ENCODE measurements at regions of chr2 and their contacts with region 1.

Region 1: DNA sequence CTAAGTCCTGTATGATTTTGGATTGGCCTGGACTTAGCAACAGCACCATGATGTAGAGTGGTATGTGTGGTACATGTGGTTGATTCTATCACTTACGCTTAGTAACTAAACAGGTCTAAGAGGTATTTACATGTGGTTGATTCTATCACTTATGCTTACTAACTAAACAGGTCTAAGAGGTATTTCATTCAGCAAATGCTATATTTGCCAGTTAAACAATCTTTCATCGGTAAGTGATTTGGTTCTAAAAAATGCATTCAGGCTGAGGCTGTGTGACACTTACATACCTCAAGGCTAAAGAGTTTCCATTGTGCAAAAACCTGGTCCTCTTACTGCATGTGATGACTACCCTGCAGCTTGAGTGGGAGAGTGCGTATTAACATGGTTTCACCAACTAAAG is 13.1 kb downstream of the EIF4E2 start:
- DNase-seq: no peak
- H3K4me3 Mint-ChIP-seq: no peak overlapping the region
- H3K27ac Mint-ChIP-seq: no peak overlapping the region
- H3K4me1 Mint-ChIP-seq: peaks cover 15% of the 10 kb centered on the region
- H3K27me3 Mint-ChIP-seq: no peaks in the 10 kb centered on the region

Region 2: DNA sequence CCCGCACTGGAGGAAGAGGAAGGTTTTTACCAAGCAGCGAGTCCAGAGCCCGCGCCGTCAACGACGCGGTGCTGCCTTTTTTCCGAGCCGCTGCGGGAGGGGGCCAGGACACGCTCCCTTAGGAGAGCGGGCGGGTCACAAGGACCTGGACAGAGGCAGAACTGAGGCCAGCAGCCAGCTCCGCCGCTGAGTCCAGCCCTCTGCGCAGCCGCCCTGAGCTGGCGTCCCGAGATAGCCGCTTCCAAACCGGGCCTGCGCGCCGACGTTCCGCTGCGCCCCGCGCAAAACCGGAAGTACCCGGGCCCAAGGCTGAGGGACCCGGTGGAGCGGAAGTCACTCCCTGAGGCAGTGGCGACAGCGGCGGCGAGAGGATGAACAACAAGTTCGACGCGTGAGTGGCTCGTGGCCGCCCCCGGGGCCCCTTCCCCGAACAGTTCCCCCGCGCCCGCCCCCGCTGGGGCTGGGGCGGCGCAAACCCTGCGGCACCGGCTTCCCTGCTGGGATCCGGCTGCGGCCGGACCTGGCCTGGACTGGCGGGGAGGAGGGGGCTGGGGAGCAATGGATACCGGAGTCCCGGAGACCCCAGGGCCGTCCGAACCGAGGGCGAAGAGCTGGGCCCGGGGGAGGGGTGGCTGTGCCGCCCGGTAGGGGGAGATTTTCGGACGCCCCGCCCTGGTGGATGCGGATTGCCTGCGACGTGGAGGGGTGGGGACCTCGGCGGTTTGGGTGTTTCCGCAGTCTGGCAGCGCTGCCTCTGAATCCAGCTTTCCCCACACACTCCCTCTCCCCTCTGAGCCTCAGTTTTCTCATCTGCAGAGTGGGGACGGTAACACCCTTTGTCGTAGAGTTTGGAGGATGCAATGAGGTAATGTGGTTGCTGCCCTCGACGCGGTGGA is 13.0 kb before region 1 on chr2 and contains the starts of genes EIF4E2 and TIGD1:
- CTCF ChIA-PET with region 1: interaction called, 4 read pairs
- POLR2A ChIA-PET with region 1: interaction called, 14 read pairs
- DNase-seq: peak; percentile 92
- H3K4me3 Mint-ChIP-seq: peak within 1 kb of the TSS; percentile 95
- H3K27ac Mint-ChIP-seq: peak within 1 kb of the TSS; percentile 99
- H3K4me1 Mint-ChIP-seq: peaks cover 67% of the 10 kb centered on the region
- H3K27me3 Mint-ChIP-seq: no peaks in the 10 kb centered on the region
- total RNA-seq, gene EIF4E2: 72.8 to 74.6 TPM
- total RNA-seq, gene TIGD1: 7.8 to 7.9 TPM

Measured in activated CD4-positive, alpha-beta memory T cell treated with anti-CD3 and anti-CD28 coated beads, Interleukin-2, amount 10 ng/mL, durations not matched to agents 7 days and 5 days (primary cell).